Esophagus muscularis mucosa (tissue), 4 donors: ENCODE measurements at regions of chr7 and their contacts with region 1.

Region 1: GRCh38 chr7:6435486-6436384 is 12.0 kb downstream of the DAGLB start:
- DNase-seq: peak; percentile 94
- H3K4me3 ChIP-seq: peak overlapping the region; percentile 21 to 38 (median 30)
- H3K27ac ChIP-seq: peak overlapping the region; percentile 39 to 67 (median 50)
- H3K4me1 ChIP-seq: peaks cover 27 to 41% (median 34%) of the 10 kb centered on the region in 4 donors
- H3K27me3 ChIP-seq: no peaks in the 10 kb centered on the region
- CTCF ChIP-seq: peak; percentile 92 to 96 (median 95)
- EP300 ChIP-seq: no peak
- POLR2A ChIP-seq: no peak

Region 2: DNA sequence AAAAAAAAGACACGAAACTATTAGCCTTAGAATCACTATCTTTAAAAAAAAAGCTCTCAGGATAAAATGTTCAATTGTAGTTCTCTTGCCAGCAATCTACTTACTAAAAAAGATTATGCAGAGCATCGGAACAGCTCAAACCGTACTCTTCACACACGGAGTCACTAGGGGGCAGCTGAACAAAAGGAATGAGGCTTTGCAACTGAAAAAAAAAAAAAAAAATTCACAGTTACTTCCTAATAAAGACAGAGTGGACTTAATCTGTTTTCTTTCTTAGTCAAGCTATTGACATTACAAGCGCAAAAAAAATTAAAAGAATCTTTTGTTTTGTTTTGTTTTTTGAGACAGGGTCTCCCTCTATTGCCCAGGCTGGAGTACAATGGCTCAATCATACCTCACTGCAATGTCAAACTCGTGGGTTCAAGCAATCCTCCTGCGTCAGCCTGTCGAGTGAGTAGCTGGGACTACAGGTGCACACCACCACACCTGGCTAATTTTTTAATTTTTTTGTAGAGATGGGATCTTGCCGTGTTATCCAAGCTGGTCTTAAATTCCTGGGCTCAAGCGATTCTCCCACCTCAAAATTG is 438.4 kb before region 1 on chr7:
- intact Hi-C with region 1: loop called (anchors 10 kb)
- DNase-seq: no peak
- H3K4me3 ChIP-seq: no peak overlapping the region
- H3K27ac ChIP-seq: peak overlapping the region in 3 of 4 donors; percentile 7 to 39 (median 16)
- H3K4me1 ChIP-seq: peaks cover 0 to 8% (median 2%) of the 10 kb centered on the region in 4 donors
- H3K27me3 ChIP-seq: no peaks in the 10 kb centered on the region
- CTCF ChIP-seq: peak; percentile 50 to 66 (median 63)
- EP300 ChIP-seq: no peak
- POLR2A ChIP-seq: no peak

Region 3: DNA sequence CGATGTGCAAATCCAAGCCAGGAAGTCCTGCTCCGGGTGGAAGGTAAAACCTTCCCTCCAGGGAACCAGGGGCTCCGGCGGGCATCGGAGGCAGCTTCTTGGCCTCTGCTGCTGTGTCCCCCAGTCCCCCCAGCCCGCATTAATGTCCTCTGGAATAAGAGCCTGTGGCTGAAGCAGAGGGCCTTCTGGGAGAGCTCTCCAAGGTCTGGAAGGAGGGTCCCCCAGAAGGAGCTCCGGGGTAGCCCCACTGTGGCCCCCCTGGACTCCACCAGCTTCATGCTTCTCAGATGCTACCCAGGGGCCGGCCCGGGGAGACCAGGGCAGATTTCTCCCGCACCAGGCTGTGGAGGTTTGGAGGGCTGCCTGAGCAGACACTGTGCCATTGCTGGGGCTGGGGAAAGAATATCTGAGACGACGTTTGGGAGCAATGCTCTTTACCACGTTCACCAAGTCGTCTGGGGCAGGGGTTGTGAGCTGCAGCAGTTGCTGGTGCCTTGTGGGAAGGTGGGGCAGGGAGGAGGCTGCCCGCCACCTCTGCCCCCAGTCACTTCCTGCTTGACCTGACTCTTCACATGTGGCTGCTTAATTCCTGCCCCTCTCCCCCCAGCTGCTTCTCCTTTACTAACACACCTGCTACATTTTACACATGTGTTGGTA is 188.0 kb after region 1 on chr7:
- intact Hi-C with region 1: no loop called
- DNase-seq: no peak
- H3K4me3 ChIP-seq: no peak overlapping the region
- H3K27ac ChIP-seq: no peak overlapping the region
- H3K4me1 ChIP-seq: no peaks in the 10 kb centered on the region
- H3K27me3 ChIP-seq: no peaks in the 10 kb centered on the region
- CTCF ChIP-seq: no peak
- EP300 ChIP-seq: no peak
- POLR2A ChIP-seq: no peak